CD8-positive, alpha-beta T cell (primary cell): ENCODE measurements at regions of chr19 and their contacts with region 1.

Region 1: DNA sequence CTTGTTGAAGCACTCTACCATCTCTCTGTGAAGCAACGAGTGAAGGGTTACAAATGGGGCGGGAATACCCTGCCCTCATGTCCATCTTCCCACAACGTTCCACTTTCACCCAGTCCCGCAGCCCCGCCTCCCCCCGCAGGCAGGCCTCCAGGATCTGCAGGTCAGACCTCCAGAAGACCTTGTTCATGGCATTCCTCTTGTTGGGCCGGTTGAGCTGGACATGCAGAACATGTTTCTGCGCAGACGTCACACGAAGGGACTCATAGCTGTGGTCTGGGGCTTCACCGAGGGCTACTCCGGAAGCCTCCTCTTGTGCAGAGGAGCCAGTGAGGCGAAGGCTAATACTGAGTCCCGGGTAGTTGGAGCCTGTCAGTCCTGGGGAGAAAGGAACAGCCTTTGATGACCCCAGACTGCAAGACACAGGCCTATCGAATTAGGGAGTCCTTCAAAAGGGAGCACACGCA is 420 bp downstream of the ECH1 start:
- DNase-seq: peak in 1 of 9 experiments; percentile 63
- ATAC-seq: no peak
- H3K4me3 ChIP-seq: peak overlapping the region; percentile 74
- H3K4me3 Mint-ChIP-seq: peak overlapping the region; percentile 90
- H3K27ac ChIP-seq: peak overlapping the region; percentile 66 to 85
- H3K27ac Mint-ChIP-seq: peak overlapping the region; percentile 89
- H3K4me1 ChIP-seq: peaks cover 21% of the 10 kb centered on the region
- H3K4me1 Mint-ChIP-seq: peaks cover 37% of the 10 kb centered on the region
- H3K27me3 ChIP-seq: no peaks in the 10 kb centered on the region
- H3K27me3 Mint-ChIP-seq: no peaks in the 10 kb centered on the region
- CTCF ChIP-seq: no peak

Region 2: DNA sequence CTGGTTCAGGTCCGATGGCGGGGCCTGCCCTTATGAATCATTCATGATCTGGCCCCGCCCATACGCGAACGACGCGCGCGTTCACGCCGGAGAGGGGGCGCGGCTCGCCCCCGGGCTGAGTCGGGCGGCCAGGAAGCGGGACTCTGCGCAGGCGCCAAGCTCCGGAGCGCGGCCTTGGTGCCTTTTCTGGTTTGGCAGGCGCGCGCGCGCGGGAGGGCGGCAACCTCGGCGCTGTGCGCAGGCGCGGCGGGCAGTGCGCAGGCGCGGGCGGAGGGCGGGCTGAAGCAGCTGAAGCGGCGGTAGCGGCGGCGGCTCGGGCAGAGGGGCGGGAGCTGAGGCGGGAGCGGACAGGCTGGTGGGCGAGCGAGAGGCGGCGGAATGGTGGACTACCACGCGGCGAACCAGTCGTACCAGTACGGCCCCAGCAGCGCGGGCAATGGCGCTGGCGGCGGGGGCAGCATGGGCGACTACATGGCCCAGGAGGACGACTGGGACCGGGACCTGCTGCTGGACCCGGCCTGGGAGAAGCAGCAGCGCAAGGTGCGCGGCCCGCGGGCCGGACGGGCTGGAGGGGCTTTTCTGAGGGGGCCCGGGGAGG is 183.7 kb before region 1 on chr19 and contains the start of gene ACTN4:
- CTCF ChIA-PET with region 1: no interaction called
- POLR2A ChIA-PET with region 1: no interaction called
- intact Hi-C with region 1: loop called in 1 of 2 experiments (anchors 1 kb)
- DNase-seq: peak; percentile 99 to 100 (median 100)
- ATAC-seq: peak; percentile 94
- H3K4me3 ChIP-seq: peak within 1 kb of the TSS; percentile 83 to 89
- H3K4me3 Mint-ChIP-seq: peak within 1 kb of the TSS; percentile 91
- H3K27ac ChIP-seq: peak within 1 kb of the TSS; percentile 49 to 63
- H3K27ac Mint-ChIP-seq: peak within 1 kb of the TSS; percentile 73
- H3K4me1 ChIP-seq: peaks cover 23% of the 10 kb centered on the region
- H3K4me1 Mint-ChIP-seq: peaks cover 32% of the 10 kb centered on the region
- H3K27me3 ChIP-seq: peaks cover 7 to 16% of the 10 kb centered on the region in 2 experiments
- H3K27me3 Mint-ChIP-seq: peaks cover 31% of the 10 kb centered on the region
- CTCF ChIP-seq: no peak
- total RNA-seq, gene ACTN4: 110 to 111 TPM

Region 3: GRCh38 chr19:38769635-38770211 is 61.5 kb before region 1 on chr19:
- CTCF ChIA-PET with region 1: no interaction called
- POLR2A ChIA-PET with region 1: interaction called, 8 read pairs
- intact Hi-C with region 1: loop called in 1 of 2 experiments (anchors 2 kb)
- DNase-seq: peak; percentile 80 to 98 (median 93)
- ATAC-seq: peak; percentile 85
- H3K4me3 ChIP-seq: peak overlapping the region; percentile 38 to 41
- H3K4me3 Mint-ChIP-seq: peak overlapping the region; percentile 68
- H3K27ac ChIP-seq: peak overlapping the region in 1 of 2 experiments; percentile 77
- H3K27ac Mint-ChIP-seq: peak overlapping the region; percentile 60
- H3K4me1 ChIP-seq: peaks cover 5% of the 10 kb centered on the region
- H3K4me1 Mint-ChIP-seq: peaks cover 5% of the 10 kb centered on the region
- H3K27me3 ChIP-seq: no peaks in the 10 kb centered on the region
- H3K27me3 Mint-ChIP-seq: no peaks in the 10 kb centered on the region
- CTCF ChIP-seq: peak; percentile 65

Region 4: GRCh38 chr19:38792250-38793111 is 38.7 kb before region 1 on chr19:
- CTCF ChIA-PET with region 1: no interaction called
- POLR2A ChIA-PET with region 1: no interaction called
- intact Hi-C with region 1: no loop called
- DNase-seq: peak in 8 of 9 experiments; percentile 9 to 62 (median 44)
- ATAC-seq: peak; percentile 36
- H3K4me3 ChIP-seq: peak overlapping the region; percentile 30 to 43
- H3K4me3 Mint-ChIP-seq: peak overlapping the region; percentile 63
- H3K27ac ChIP-seq: no peak overlapping the region
- H3K27ac Mint-ChIP-seq: no peak overlapping the region
- H3K4me1 ChIP-seq: peaks cover 7% of the 10 kb centered on the region
- H3K4me1 Mint-ChIP-seq: peaks cover 4% of the 10 kb centered on the region
- H3K27me3 ChIP-seq: no peaks in the 10 kb centered on the region
- H3K27me3 Mint-ChIP-seq: no peaks in the 10 kb centered on the region
- CTCF ChIP-seq: no peak

Region 5: GRCh38 chr19:38869856-38870607 is 38.9 kb after region 1 on chr19:
- CTCF ChIA-PET with region 1: interaction called, 4 read pairs
- POLR2A ChIA-PET with region 1: interaction called, 14 read pairs
- intact Hi-C with region 1: loop called (anchors 1 kb)
- DNase-seq: peak; percentile 89 to 98 (median 94)
- ATAC-seq: peak; percentile 88
- H3K4me3 ChIP-seq: peak overlapping the region; percentile 75 to 79
- H3K4me3 Mint-ChIP-seq: peak overlapping the region; percentile 84
- H3K27ac ChIP-seq: peak overlapping the region; percentile 50 to 79
- H3K27ac Mint-ChIP-seq: peak overlapping the region; percentile 89
- H3K4me1 ChIP-seq: peaks cover 46% of the 10 kb centered on the region
- H3K4me1 Mint-ChIP-seq: peaks cover 50% of the 10 kb centered on the region
- H3K27me3 ChIP-seq: no peaks in the 10 kb centered on the region
- H3K27me3 Mint-ChIP-seq: no peaks in the 10 kb centered on the region
- CTCF ChIP-seq: peak; percentile 84

Region 6: DNA sequence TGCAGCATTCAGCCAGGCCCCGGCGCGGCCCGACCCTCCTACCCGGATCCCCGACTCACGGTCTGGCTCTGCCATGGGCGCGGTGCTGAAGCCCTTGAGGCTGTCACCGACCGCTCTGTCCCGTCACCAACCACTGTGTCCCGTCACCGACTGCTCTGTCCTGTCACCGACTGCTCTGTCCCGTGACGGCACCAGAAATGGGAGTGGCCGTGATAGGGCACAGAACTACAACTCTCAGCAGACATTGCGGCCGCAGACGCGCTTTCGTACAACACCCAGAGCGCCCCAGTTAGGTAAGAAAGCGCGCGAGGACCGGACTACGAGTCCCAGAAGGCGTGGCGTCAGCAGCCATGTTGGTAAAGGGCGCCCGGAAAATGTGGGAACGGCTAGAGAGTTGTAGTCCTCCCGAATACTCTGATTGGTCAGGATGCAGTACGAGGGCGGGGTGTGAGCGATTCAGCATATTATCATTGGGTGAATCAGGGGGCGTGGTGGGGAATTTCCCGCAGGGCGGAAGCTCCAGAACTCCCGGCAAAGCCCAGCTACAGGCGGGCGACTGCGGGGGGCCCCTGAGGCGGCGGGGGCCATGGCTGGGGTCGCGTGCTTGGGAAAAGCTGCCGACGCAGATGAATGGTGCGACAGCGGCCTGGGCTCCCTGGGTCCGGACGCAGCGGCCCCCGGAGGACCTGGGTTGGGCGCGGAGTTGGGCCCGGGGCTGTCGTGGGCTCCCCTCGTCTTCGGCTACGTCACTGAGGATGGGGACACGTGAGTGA is 68.5 kb after region 1 on chr19 and contains the starts of genes NFKBIB and SIRT2:
- CTCF ChIA-PET with region 1: no interaction called
- POLR2A ChIA-PET with region 1: no interaction called
- intact Hi-C with region 1: loop called (anchors 1 kb)
- DNase-seq: peak; percentile 97 to 100 (median 99)
- ATAC-seq: peak; percentile 85
- H3K4me3 ChIP-seq: peak within 1 kb of the TSS; percentile 68 to 88
- H3K4me3 Mint-ChIP-seq: peak within 1 kb of the TSS; percentile 93
- H3K27ac ChIP-seq: peak within 1 kb of the TSS; percentile 93 to 100
- H3K27ac Mint-ChIP-seq: peak within 1 kb of the TSS; percentile 98
- H3K4me1 ChIP-seq: peaks cover 23% of the 10 kb centered on the region
- H3K4me1 Mint-ChIP-seq: peaks cover 57% of the 10 kb centered on the region
- H3K27me3 ChIP-seq: no peaks in the 10 kb centered on the region
- H3K27me3 Mint-ChIP-seq: no peaks in the 10 kb centered on the region
- CTCF ChIP-seq: no peak
- total RNA-seq, gene NFKBIB: 62.9 to 66.1 TPM
- total RNA-seq, gene SIRT2: 90.6 to 95.1 TPM

Region 7: GRCh38 chr19:39001041-39001440 is 169.9 kb after region 1 on chr19:
- CTCF ChIA-PET with region 1: no interaction called
- POLR2A ChIA-PET with region 1: no interaction called
- intact Hi-C with region 1: no loop called
- DNase-seq: no peak
- ATAC-seq: no peak
- H3K4me3 ChIP-seq: no peak overlapping the region
- H3K4me3 Mint-ChIP-seq: no peak overlapping the region
- H3K27ac ChIP-seq: no peak overlapping the region
- H3K27ac Mint-ChIP-seq: no peak overlapping the region
- H3K4me1 ChIP-seq: no peaks in the 10 kb centered on the region
- H3K4me1 Mint-ChIP-seq: no peaks in the 10 kb centered on the region
- H3K27me3 ChIP-seq: no peaks in the 10 kb centered on the region
- H3K27me3 Mint-ChIP-seq: peaks cover 18% of the 10 kb centered on the region
- CTCF ChIP-seq: no peak